ENCODE measurements at regions of chr6 and their contacts with region 1.

Region 1: DNA sequence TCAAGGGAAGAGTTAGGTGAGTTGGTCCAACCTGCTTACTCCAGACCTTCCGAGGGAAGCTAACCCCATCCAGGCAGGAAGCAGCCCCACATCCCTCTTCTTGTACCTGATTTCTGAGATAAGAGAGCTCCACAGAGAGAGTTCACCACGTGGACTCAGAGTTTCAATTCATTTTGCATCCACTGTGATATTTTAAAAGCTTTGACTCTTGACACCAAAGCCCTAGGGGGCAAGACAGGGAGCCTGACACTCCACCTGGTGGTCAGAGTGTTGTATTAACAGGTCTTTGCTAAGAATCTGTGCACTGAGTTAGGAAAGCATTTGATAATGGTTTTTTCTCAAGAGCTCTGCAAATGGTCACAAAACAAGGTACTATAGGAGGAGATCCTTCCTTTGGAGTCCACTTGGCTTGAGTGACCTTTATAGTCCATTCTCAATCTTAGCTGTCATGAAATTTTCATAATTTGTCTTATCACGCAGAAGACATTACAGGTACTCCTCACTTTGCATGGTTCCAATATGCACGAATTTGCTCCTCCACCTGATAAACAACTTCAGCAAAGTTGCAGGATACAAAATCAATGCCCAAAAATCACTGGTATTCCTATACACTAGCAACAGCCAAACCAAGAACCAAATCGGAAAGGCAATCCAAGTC is 56.2 kb upstream of the RIPOR2 start:
- DNase-seq: peak; percentile 46 to 89 (median 75)
- ATAC-seq: peak; percentile 87 to 93 (median 91)
- H3K4me3 ChIP-seq: no peak overlapping the region
- H3K4me3 Mint-ChIP-seq: peak overlapping the region; percentile 17 to 63 (median 47)
- H3K27ac ChIP-seq: peak overlapping the region; percentile 48
- H3K27ac Mint-ChIP-seq: peak overlapping the region; percentile 94
- H3K4me1 ChIP-seq: peaks cover 26 to 29% of the 10 kb centered on the region in 2 experiments
- H3K4me1 Mint-ChIP-seq: peaks cover 78 to 80% (median 78%) of the 10 kb centered on the region in 3 donors
- H3K27me3 ChIP-seq: no peaks in the 10 kb centered on the region
- H3K27me3 Mint-ChIP-seq: no peaks in the 10 kb centered on the region

Region 2: DNA sequence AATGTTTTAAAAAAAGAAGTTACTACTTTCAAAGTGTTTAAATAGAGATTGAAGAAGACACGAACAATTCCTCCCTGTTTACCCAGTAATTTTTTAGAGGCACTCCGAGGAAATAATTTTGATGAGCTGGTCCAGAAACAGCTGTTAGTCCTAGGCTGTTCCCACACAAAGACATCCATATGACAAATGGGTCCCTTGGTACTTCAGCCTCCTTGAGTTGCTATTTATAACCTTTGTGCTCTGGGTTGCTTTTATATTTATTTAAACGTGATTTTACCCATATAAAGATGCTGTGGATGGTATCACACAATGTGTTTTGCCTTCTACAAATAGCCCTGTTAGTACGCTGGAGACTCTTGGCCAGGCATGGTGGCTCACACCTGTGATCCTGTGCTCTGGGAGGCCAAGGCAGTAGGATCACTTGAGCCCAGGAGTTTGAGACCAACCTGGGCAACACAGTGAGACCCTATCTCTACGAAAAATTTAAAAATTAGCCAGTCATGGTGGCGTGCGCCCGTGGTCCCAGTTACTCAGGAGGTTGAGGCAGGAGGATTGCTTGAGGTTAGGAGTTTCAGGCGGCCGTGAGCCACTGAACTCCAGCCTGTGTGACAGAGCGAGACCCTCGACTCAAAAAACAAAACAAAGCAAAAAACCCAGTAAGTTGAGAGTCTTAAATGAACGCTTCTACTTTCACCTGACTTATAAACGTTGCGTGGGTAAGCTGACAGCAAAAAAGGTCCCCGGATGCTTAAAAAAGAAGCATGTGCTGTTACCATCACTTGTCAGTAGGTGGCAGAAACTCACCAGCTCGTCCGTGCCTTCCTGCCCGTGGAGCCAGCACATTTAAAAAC is 136.3 kb before region 1 on chr6:
- CTCF ChIA-PET with region 1: interaction called, 14 to 79 read pairs
- POLR2A ChIA-PET with region 1: interaction called, 3 read pairs
- DNase-seq: peak in 34 of 35 experiments; percentile 47 to 90 (median 64)
- ATAC-seq: peak; percentile 32 to 59 (median 50)
- H3K4me3 ChIP-seq: no peak overlapping the region
- H3K4me3 Mint-ChIP-seq: peak overlapping the region in 1 of 3 donors; percentile 73
- H3K27ac ChIP-seq: peak overlapping the region; percentile 76
- H3K27ac Mint-ChIP-seq: peak overlapping the region; percentile 95 to 99
- H3K4me1 ChIP-seq: peaks cover 42 to 47% of the 10 kb centered on the region in 2 experiments
- H3K4me1 Mint-ChIP-seq: peaks cover 52 to 72% (median 59%) of the 10 kb centered on the region in 3 donors
- H3K27me3 ChIP-seq: no peaks in the 10 kb centered on the region
- H3K27me3 Mint-ChIP-seq: no peaks in the 10 kb centered on the region

Region 3: GRCh38 chr6:24888715-24889370 is 103.1 kb before region 1 on chr6:
- CTCF ChIA-PET with region 1: interaction called, 5 to 22 read pairs
- POLR2A ChIA-PET with region 1: no interaction called
- DNase-seq: no peak
- ATAC-seq: peak in 1 of 4 experiments; percentile 62
- H3K4me3 ChIP-seq: no peak overlapping the region
- H3K4me3 Mint-ChIP-seq: peak overlapping the region in 2 of 3 donors; percentile 41 to 56
- H3K27ac ChIP-seq: peak overlapping the region; percentile 28
- H3K27ac Mint-ChIP-seq: peak overlapping the region; percentile 56 to 88
- H3K4me1 ChIP-seq: peaks cover 45 to 53% of the 10 kb centered on the region in 2 experiments
- H3K4me1 Mint-ChIP-seq: peaks cover 84 to 95% (median 87%) of the 10 kb centered on the region in 3 donors
- H3K27me3 ChIP-seq: no peaks in the 10 kb centered on the region
- H3K27me3 Mint-ChIP-seq: no peaks in the 10 kb centered on the region

Region 4: GRCh38 chr6:24924580-24925356 is 67.2 kb before region 1 on chr6:
- CTCF ChIA-PET with region 1: interaction called, 10 to 21 read pairs
- POLR2A ChIA-PET with region 1: interaction called, 3 to 4 read pairs
- DNase-seq: peak in 1 of 35 experiments; percentile 46
- ATAC-seq: peak; percentile 28 to 54 (median 38)
- H3K4me3 ChIP-seq: peak overlapping the region in 1 of 2 donors; percentile 26
- H3K4me3 Mint-ChIP-seq: peak overlapping the region; percentile 75 to 93 (median 76)
- H3K27ac ChIP-seq: peak overlapping the region; percentile 27
- H3K27ac Mint-ChIP-seq: peak overlapping the region; percentile 83 to 91
- H3K4me1 ChIP-seq: peaks cover 66 to 72% of the 10 kb centered on the region in 2 experiments
- H3K4me1 Mint-ChIP-seq: peaks cover 88 to 98% (median 91%) of the 10 kb centered on the region in 3 donors
- H3K27me3 ChIP-seq: no peaks in the 10 kb centered on the region
- H3K27me3 Mint-ChIP-seq: no peaks in the 10 kb centered on the region

Region 5: GRCh38 chr6:24974182-24975171 is 17.5 kb before region 1 on chr6:
- CTCF ChIA-PET with region 1: interaction called in 1 of 2 experiments, 13 read pairs
- POLR2A ChIA-PET with region 1: interaction called in 1 of 2 experiments, 3 read pairs
- DNase-seq: peak in 4 of 35 experiments; percentile 8 to 56 (median 22)
- ATAC-seq: peak; percentile 80 to 89 (median 84)
- H3K4me3 ChIP-seq: no peak overlapping the region
- H3K4me3 Mint-ChIP-seq: peak overlapping the region; percentile 26 to 34 (median 34)
- H3K27ac ChIP-seq: peak overlapping the region; percentile 76
- H3K27ac Mint-ChIP-seq: peak overlapping the region; percentile 93 to 96
- H3K4me1 ChIP-seq: peaks cover 4 to 21% of the 10 kb centered on the region in 2 experiments
- H3K4me1 Mint-ChIP-seq: peaks cover 73 to 74% (median 73%) of the 10 kb centered on the region in 3 donors
- H3K27me3 ChIP-seq: no peaks in the 10 kb centered on the region
- H3K27me3 Mint-ChIP-seq: no peaks in the 10 kb centered on the region

Region 6: GRCh38 chr6:25027221-25027916 is 35.4 kb after region 1 on chr6:
- CTCF ChIA-PET with region 1: interaction called, 5 to 17 read pairs
- POLR2A ChIA-PET with region 1: no interaction called
- DNase-seq: peak; percentile 58 to 87 (median 76)
- ATAC-seq: peak; percentile 95 to 98 (median 96)
- H3K4me3 ChIP-seq: peak overlapping the region; percentile 35 to 58
- H3K4me3 Mint-ChIP-seq: peak overlapping the region; percentile 72 to 80 (median 75)
- H3K27ac ChIP-seq: peak overlapping the region; percentile 85
- H3K27ac Mint-ChIP-seq: peak overlapping the region; percentile 86 to 91
- H3K4me1 ChIP-seq: peaks cover 21 to 30% of the 10 kb centered on the region in 2 experiments
- H3K4me1 Mint-ChIP-seq: peaks cover 46 to 60% (median 55%) of the 10 kb centered on the region in 3 donors
- H3K27me3 ChIP-seq: no peaks in the 10 kb centered on the region
- H3K27me3 Mint-ChIP-seq: no peaks in the 10 kb centered on the region

Region 7: GRCh38 chr6:25103603-25104002 is 111.7 kb after region 1 on chr6:
- CTCF ChIA-PET with region 1: no interaction called
- POLR2A ChIA-PET with region 1: no interaction called
- DNase-seq: no peak
- ATAC-seq: no peak
- H3K4me3 ChIP-seq: no peak overlapping the region
- H3K4me3 Mint-ChIP-seq: no peak overlapping the region
- H3K27ac ChIP-seq: no peak overlapping the region
- H3K27ac Mint-ChIP-seq: no peak overlapping the region
- H3K4me1 ChIP-seq: no peaks in the 10 kb centered on the region
- H3K4me1 Mint-ChIP-seq: peaks cover 0 to 9% (median 7%) of the 10 kb centered on the region in 3 donors
- H3K27me3 ChIP-seq: no peaks in the 10 kb centered on the region
- H3K27me3 Mint-ChIP-seq: no peaks in the 10 kb centered on the region

Measured in T-cell (primary cell).